Activated CD8-positive, alpha-beta T cell treated with anti-CD3 and anti-CD28 coated beads, Interleukin-2, amount 10 ng/mL, durations not matched to agents 7 days and 5 days (primary cell): ENCODE measurements at regions of chr15 and their contacts with region 1.

Region 1: DNA sequence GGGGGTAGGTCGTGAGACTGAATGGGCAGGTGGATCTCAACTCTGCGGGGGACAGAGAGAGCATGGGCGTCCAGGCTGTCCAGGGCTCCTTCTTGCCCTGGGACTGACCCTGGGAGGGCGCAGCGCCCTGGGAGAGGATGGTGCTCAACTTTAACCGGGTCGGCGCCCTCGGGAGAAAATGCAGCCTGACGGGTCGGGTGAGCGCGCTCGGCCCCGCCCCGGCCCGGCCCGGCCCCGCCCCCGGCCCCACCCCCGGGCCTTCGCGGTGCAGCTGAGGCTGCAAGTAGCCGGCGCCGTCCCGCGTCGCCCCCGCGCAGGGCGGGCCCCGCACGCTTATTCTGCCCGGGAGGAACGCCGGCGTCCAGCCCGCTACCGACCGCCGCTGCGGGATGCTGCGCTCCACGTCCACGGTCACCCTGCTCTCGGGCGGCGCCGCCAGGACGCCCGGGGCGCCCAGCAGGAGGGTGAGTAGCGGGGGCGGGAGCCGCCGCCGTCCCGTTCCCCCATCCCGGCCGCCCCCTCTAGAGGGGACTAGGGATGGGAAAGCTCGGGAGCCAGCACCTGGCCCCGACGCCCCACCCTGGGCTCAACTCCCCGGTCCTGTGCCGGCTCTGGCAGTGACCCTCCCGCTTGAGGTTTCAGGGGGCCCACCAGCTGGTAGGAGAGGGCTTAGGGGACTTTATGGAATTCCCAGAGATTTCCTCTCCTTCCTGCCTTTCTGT is at the start of gene MYZAP:
- DNase-seq: peak; percentile 31
- ATAC-seq: peak; percentile 93
- H3K4me3 Mint-ChIP-seq: peak within 1 kb of the TSS; percentile 19
- H3K27ac Mint-ChIP-seq: no peak within 1 kb of the TSS
- H3K4me1 Mint-ChIP-seq: peaks cover 4% of the 10 kb centered on the region
- H3K27me3 Mint-ChIP-seq: peaks cover 51% of the 10 kb centered on the region
- total RNA-seq, gene MYZAP: not detected

Region 2: GRCh38 chr15:57561041-57561711 is 30.6 kb before region 1 on chr15:
- CTCF ChIA-PET with region 1: interaction called, 12 read pairs
- POLR2A ChIA-PET with region 1: no interaction called
- DNase-seq: peak; percentile 74
- ATAC-seq: peak; percentile 84
- H3K4me3 Mint-ChIP-seq: no peak overlapping the region
- H3K27ac Mint-ChIP-seq: no peak overlapping the region
- H3K4me1 Mint-ChIP-seq: peaks cover 34% of the 10 kb centered on the region
- H3K27me3 Mint-ChIP-seq: peaks cover 13% of the 10 kb centered on the region

Region 3: DNA sequence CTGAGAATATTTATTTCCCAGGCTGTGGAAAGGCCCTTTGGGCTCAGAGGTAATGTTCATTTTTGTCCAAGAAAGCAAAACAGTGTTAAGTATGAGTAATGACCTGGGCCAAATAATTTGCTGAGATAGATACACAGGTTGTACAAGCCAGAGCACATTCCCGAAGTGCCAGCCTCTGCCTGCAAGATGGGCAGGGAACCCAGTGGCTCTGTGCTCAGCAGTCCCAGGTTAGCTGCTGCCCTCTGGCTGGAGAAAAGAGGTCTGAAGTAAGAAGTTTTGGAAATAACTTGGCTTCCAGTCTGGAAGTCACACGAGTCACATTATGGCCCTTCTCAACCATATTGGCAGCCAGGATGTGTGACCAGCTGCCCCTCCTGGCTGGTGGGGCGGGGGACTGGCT is 20.1 kb after region 1 on chr15:
- CTCF ChIA-PET with region 1: no interaction called
- POLR2A ChIA-PET with region 1: no interaction called
- DNase-seq: no peak
- ATAC-seq: no peak
- H3K4me3 Mint-ChIP-seq: no peak overlapping the region
- H3K27ac Mint-ChIP-seq: no peak overlapping the region
- H3K4me1 Mint-ChIP-seq: no peaks in the 10 kb centered on the region
- H3K27me3 Mint-ChIP-seq: no peaks in the 10 kb centered on the region